ENCODE measurements at regions of chr9 and their contacts with region 1.

Region 1: GRCh38 chr9:137168905-137169856 is 670 bp downstream of the LRRC26 start:
- DNase-seq: peak; percentile 74 to 84
- ATAC-seq: peak; percentile 37 to 57
- H3K4me3 ChIP-seq: peak overlapping the region; percentile 47
- H3K27ac ChIP-seq: peak overlapping the region; percentile 59 to 78
- H3K4me1 ChIP-seq: peaks cover 27% of the 10 kb centered on the region
- CTCF ChIP-seq: no peak
- EP300 ChIP-seq: no peak
- POLR2A ChIP-seq: peak; percentile 39
- RAD21 ChIP-seq: no peak

Region 2: DNA sequence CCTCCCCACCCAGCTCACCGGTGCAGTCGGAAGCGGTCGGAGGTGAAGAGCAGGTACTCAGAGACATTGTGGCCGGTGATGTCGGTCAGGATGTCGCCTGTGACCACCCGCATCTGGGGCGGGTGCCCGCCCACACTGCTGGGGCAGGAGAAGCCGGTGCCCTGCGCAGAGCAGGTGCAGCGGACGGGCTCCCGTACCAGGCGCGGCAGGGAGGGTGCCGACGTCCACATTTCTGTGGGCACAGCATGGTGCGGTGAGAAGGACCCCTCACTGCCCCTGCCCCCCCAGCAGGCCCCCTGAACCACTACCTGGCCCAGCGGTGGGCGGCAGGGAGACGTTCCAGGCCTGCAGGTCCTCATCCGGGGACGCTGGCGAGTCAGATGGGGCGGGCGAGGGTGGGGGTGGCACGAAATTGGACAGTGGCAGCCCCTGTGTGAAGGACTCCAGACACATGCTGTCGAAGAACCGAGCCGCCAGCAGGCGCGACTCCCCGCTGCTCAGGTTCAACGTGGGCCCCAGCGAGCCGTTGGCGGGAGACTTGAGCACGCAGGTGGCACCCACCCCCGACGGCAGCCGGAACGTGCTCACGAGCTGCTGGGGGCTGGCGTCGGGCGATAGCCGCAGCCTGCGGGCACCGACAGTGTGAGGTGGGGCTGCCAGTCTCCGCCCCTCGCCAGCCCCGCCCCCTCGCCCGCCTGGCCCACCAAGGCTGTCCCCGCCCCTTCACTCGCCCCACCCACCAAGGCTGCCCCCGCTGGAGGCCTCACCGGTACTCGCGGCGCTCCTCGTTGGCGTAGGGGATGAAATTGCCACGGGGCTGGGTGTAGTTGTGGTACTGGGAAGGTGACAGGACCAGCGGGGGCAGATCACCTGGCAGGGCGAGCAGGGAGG is 156.2 kb before region 1 on chr9:
- CTCF ChIA-PET with region 1: no interaction called
- POLR2A ChIA-PET with region 1: no interaction called
- DNase-seq: no peak
- ATAC-seq: 0 out of 6 replicates have a peak, but pooled peaks of 1 of the 2 experiments have one; percentile 9
- H3K4me3 ChIP-seq: no peak overlapping the region
- H3K27ac ChIP-seq: no peak overlapping the region
- H3K4me1 ChIP-seq: no peaks in the 10 kb centered on the region
- CTCF ChIP-seq: no peak
- EP300 ChIP-seq: no peak
- POLR2A ChIP-seq: no peak
- RAD21 ChIP-seq: no peak

Region 3: DNA sequence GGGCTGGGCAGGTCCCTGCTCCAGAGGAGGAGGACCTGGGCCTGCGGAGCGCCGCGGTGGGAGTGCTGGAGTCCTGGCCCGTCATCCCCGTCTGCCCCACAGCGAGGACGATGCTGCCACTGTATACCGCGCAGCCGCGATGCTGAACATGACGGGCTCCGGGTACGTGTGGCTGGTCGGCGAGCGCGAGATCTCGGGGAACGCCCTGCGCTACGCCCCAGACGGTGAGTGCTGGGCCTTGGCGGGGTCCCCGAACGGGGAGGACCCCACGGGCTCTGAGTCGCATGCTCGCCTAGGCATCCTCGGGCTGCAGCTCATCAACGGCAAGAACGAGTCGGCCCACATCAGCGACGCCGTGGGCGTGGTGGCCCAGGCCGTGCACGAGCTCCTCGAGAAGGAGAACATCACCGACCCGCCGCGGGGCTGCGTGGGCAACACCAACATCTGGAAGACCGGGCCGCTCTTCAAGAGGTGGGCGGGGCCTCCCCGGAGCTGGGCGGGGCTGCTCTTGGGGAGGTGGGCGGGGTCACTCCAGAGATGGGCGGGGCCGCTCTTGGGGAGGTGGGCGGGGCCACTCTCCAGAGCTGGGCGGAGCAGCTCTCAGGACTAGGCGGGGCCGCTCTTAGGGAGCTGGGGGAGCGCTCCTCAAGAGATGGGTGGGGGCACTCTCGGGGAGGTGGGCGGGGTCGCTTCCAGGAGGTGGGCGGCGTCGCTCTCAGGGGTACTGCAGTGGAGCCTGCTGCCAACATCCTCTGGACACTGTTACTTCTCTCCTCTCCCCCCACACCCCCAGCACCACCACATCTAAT is 12.4 kb before region 1 on chr9:
- CTCF ChIA-PET with region 1: interaction called, 11 read pairs
- POLR2A ChIA-PET with region 1: interaction called, 3 read pairs
- DNase-seq: peak in 1 of 2 experiments; percentile 58
- ATAC-seq: peak; percentile 19 to 62; a peak in 4 of 6 replicates
- H3K4me3 ChIP-seq: no peak overlapping the region
- H3K27ac ChIP-seq: no peak overlapping the region
- H3K4me1 ChIP-seq: peaks cover 20% of the 10 kb centered on the region; the same call in 2 of the 3 replicates
- CTCF ChIP-seq: no peak
- EP300 ChIP-seq: no peak
- POLR2A ChIP-seq: no peak
- RAD21 ChIP-seq: no peak

Measured in A549 (cell line).